Activated CD4-positive, alpha-beta T cell treated with anti-CD3 and anti-CD28 coated beads, Interleukin-2, amount 10 ng/mL, durations not matched to agents 24 days and 14 days (primary cell): ENCODE measurements at regions of chrX and their contacts with region 1.

Region 1: DNA sequence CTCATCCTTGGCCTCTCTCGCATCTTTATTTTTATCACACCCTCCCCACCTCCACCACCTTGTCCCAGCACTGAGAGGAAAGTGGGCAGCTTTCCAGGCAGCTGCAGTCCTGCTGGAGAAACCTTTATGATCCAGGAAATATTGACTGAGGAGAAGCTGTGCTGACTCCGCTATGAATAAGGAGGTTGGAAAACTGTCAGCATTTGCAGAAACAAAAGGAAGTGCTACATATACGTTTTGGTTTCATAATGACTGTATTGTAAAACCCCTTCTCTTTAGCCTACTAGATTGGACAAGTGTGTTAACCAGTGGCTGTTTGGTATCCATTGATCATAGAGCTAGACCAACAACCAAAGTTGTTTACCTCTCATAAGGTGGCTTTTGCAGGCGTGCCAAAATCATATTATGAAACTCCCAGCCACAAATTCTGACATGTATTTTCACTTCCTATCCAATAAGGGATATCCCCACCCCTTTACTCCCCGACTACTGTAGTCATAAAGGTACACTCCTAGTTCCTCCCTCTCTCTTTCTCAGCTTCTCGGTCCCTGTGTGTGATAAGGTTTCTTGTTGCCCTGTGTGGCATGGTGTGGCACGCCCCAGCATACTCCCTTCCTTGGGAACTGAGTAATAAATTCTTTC is 88.4 kb downstream of the GPR143 start:
- DNase-seq: peak; percentile 82
- H3K4me3 Mint-ChIP-seq: peak overlapping the region; percentile 58
- H3K27ac Mint-ChIP-seq: peak overlapping the region; percentile 79
- H3K4me1 Mint-ChIP-seq: peaks cover 20% of the 10 kb centered on the region
- H3K27me3 Mint-ChIP-seq: no peaks in the 10 kb centered on the region

Region 2: DNA sequence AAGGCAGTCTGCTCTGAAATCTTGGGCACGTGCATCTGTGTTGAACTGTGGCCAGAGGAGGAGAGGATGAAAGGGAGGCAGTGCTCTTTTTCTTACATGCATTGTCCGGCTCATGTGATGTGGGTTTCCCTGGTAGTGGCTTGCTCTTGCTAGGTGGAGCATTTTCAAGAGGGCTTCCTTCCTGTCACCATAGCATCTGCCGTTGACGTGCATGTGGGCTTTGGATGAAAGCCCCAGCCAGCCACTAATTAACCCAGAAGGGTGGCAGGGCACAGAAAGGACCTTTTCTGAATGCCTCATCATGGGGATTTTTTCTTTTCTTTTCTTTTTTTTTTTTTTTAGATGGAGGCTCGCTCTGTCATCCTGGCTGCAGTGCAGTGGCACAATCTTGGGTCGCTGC is 32.9 kb before region 1 on chrX:
- intact Hi-C with region 1: loop called (anchors 5 kb)
- DNase-seq: peak; percentile 80
- H3K4me3 Mint-ChIP-seq: peak overlapping the region; percentile 30
- H3K27ac Mint-ChIP-seq: no peak overlapping the region
- H3K4me1 Mint-ChIP-seq: peaks cover 19% of the 10 kb centered on the region
- H3K27me3 Mint-ChIP-seq: no peaks in the 10 kb centered on the region